ENCODE measurements at regions of chr6 and their contacts with region 1.

Region 1: GRCh38 chr6:93713974-93714373 is 294.6 kb upstream of the EPHA7 start:
- DNase-seq: no peak
- H3K4me3 ChIP-seq: no peak overlapping the region
- H3K27ac ChIP-seq: no peak overlapping the region
- H3K4me1 ChIP-seq: no peaks in the 10 kb centered on the region
- H3K27me3 ChIP-seq: no peaks in the 10 kb centered on the region
- CTCF ChIP-seq: no peak
- POLR2A ChIP-seq: no peak

Region 2: DNA sequence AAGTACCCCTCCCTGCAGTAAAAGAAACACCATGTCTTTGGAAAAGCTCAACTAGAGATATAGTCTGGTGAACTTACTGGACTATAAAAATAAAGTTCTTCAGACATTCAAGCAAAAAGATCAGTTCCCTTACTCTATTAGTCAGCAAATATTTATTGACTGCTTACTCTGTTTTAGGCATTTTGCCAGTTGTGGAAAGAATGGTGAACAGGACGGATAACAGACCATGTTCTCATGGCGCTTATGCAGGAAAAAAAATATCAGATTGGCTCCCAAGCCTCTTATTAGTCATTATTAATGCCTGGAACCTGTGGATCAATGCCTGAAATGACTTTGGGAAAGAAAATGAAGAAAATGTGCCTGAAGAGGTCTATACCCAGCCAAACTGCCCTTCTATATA is 12.4 kb before region 1 on chr6:
- intact Hi-C with region 1: loop called (anchors 1 kb)
- DNase-seq: no peak
- H3K4me3 ChIP-seq: no peak overlapping the region
- H3K27ac ChIP-seq: no peak overlapping the region
- H3K4me1 ChIP-seq: no peaks in the 10 kb centered on the region
- H3K27me3 ChIP-seq: no peaks in the 10 kb centered on the region
- CTCF ChIP-seq: no peak
- POLR2A ChIP-seq: no peak